ENCODE measurements at regions of chr1 and their contacts with region 1.

Region 1: DNA sequence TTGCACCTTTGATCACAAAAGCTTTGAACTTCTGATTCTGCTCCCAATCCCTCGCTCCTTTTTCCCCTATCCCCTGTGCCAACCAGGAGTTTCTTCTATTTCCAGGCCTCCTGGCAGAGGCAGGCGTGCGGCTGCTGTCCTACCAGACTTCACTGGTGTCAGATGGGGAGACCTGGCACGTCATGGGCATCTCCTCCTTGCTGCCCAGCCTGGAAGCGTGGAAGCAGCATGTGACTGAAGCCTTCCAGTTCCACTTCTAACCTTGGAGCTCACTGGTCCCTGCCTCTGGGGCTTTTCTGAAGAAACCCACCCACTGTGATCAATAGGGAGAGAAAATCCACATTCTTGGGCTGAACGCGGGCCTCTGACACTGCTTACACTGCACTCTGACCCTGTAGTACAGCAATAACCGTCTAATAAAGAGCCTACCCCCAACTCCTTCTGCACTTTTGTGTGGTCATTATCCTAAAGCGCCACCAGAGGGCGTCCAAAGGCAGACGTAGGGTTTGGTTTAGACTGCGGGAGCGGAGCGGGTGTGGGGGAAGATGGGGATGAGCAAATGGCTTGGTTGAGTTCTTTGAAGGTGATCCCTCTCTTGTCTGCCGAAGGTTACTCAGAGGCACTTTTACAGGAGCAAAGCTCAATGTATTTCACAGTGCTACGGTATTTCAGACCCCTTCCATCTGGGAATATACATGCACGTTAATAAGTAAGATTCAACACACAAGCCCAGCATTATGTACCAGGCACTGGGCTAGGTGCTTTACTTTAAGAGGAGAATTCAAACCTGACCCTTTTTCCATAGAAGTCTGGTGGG is 24.7 kb downstream of the HMGCS2 start:
- DNase-seq: peak; percentile 65 to 77 (median 72)
- H3K4me3 ChIP-seq: no peak overlapping the region
- H3K27ac ChIP-seq: no peak overlapping the region
- H3K4me1 ChIP-seq: peaks cover 9% of the 10 kb centered on the region
- H3K27me3 ChIP-seq: no peaks in the 10 kb centered on the region
- CTCF ChIP-seq: peak; percentile 64 to 79 (median 68)
- EP300 ChIP-seq: no peak
- POLR2A ChIP-seq: no peak

Region 2: DNA sequence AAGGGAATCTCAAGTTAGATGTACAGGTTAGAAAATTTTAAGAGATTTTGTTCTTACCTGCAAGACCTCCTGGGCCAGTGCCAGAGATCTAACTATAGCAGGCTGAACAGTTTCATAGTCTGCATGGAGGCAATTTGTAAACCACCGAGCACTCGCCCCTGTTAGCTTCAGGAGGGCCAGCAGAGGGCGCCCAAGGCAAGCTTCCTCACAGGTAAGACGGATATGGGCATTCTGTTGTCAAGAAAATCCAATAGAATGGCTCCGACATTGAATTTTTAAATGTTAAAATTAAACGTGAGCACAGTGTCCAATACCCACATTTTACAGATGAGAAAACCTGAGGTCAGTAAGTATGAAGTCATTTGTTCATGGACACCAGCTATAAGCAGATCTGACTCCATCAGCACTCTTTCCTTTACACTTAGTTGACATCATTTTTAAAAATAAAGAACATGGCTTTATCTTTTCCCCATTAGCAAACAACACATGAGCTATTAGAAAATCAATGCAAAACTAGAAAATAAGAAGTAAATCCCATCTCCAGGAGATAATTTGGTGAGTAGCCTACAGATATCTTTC is 65.1 kb after region 1 on chr1:
- intact Hi-C with region 1: loop called in 1 of 4 experiments (anchors 10 kb)
- DNase-seq: peak; percentile 58 to 82 (median 70)
- H3K4me3 ChIP-seq: no peak overlapping the region
- H3K27ac ChIP-seq: no peak overlapping the region
- H3K4me1 ChIP-seq: no peaks in the 10 kb centered on the region
- H3K27me3 ChIP-seq: no peaks in the 10 kb centered on the region
- CTCF ChIP-seq: peak; percentile 52 to 56 (median 54)
- EP300 ChIP-seq: no peak
- POLR2A ChIP-seq: no peak

Measured in ovary (tissue), 10 donors.